ENCODE measurements at regions of chr5 and their contacts with region 1.

Region 1: GRCh38 chr5:172454358-172455086 is at the start of gene SH3PXD2B:
- DNase-seq: peak; percentile 39
- H3K4me3 ChIP-seq: peak within 1 kb of the TSS; percentile 80 to 92
- H3K27ac ChIP-seq: peak within 1 kb of the TSS; percentile 81 to 85
- H3K4me1 ChIP-seq: peaks cover 5% of the 10 kb centered on the region
- H3K27me3 ChIP-seq: no peaks in the 10 kb centered on the region
- CTCF ChIP-seq: no peak
- POLR2A ChIP-seq: peak; percentile 19
- total RNA-seq, gene SH3PXD2B: 15.8 to 38.0 TPM

Region 2: GRCh38 chr5:172283020-172283861 is 171.3 kb before region 1 on chr5 and contains the start of gene UBTD2:
- intact Hi-C with region 1: loop called (anchors 10 kb)
- DNase-seq: peak; percentile 78
- H3K4me3 ChIP-seq: peak within 1 kb of the TSS; percentile 82 to 97
- H3K27ac ChIP-seq: peak within 1 kb of the TSS; percentile 93
- H3K4me1 ChIP-seq: peaks cover 4% of the 10 kb centered on the region
- H3K27me3 ChIP-seq: no peaks in the 10 kb centered on the region
- CTCF ChIP-seq: peak; percentile 31 to 63 (median 44)
- POLR2A ChIP-seq: peak; percentile 27
- total RNA-seq, gene UBTD2: 14.3 to 28.2 TPM

Region 3: GRCh38 chr5:172412724-172413286 is 41.7 kb before region 1 on chr5:
- intact Hi-C with region 1: loop called (anchors 5 kb)
- DNase-seq: no peak
- H3K4me3 ChIP-seq: no peak overlapping the region
- H3K27ac ChIP-seq: peak overlapping the region; percentile 62
- H3K4me1 ChIP-seq: no peaks in the 10 kb centered on the region
- H3K27me3 ChIP-seq: no peaks in the 10 kb centered on the region
- CTCF ChIP-seq: no peak
- POLR2A ChIP-seq: no peak